Endothelial cell of umbilical vein (primary cell): ENCODE measurements at regions of chr13 and their contacts with region 1.

Region 1: DNA sequence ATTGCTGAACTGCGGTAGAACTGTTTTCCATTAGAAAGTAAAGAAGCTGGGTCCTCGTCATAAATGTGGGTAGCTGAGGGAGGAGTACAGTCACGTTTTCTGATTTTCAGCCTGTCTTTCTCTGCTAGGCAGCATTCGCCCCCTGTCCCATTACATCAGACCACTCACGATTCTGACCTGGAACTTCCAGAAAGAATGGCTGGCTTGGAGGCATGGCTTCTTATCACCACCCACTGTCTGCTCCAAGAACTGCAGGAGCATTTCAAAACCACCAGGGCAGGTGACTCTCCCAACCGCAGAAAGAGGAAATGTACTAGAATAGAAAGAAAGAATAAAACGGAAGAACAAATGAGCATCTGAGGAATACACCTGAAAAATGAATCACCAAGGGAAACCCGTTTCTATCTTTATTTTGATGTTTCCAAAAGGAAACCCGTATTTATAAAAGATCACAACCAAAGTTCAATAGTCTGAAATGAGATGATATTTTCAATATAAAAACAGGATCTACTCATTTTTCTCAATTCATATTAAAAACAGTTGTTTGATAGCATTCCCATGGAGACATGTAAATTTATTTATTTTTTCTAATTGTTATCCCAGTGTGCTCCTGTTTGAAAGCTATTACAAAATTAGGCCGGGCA is 22.1 kb upstream of the POMP start:
- DNase-seq: peak; percentile 85
- H3K4me3 ChIP-seq: no peak overlapping the region
- H3K27ac ChIP-seq: no peak overlapping the region
- H3K4me1 ChIP-seq: peaks cover 18% of the 10 kb centered on the region
- H3K27me3 ChIP-seq: no peaks in the 10 kb centered on the region
- CTCF ChIP-seq: peak; percentile 81 to 92
- POLR2A ChIP-seq: no peak

Region 2: DNA sequence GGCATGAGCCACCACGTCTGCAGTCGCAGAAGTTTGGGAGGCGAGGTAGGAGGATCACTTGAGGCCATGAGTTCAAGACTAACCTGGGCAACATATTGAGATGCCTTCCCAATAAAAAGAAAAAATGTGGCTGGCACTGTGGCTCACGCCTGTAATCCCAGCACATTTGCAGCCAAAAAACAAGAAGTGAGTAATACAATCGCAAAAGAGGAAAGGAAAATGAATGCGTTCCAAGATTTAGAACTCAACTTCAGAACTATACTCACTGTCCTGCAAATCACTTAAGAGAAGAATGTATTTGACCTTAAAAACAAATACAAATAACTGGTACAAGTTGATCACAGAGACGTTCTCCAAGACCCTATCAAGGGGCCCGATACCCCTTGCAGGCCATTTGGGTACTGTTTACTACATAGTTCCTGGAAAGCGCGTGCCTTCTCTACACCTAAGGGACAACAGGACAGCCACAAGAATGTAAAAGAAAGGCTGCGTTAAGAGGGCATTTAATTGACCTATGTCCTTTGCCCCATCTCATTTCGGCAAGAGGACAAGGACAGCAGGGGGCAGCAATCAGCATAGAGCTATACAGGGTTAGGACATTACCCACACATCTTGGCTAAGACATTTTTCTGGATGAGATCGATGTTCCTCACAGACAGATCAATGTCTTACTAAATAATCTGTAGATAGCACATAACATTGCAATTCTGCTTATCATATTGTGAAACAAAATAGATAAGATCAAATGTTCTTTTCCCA is 577.8 kb before region 1 on chr13:
- CTCF ChIA-PET with region 1: interaction called, 4 read pairs
- POLR2A ChIA-PET with region 1: no interaction called
- dilution Hi-C with region 1: no loop called
- intact Hi-C with region 1: loop called (anchors 1 kb)
- DNase-seq: peak; percentile 46
- H3K4me3 ChIP-seq: no peak overlapping the region
- H3K27ac ChIP-seq: no peak overlapping the region
- H3K4me1 ChIP-seq: no peaks in the 10 kb centered on the region
- H3K27me3 ChIP-seq: peaks cover 7 to 9% of the 10 kb centered on the region in 2 experiments
- CTCF ChIP-seq: peak; percentile 40 to 44
- POLR2A ChIP-seq: no peak

Region 3: DNA sequence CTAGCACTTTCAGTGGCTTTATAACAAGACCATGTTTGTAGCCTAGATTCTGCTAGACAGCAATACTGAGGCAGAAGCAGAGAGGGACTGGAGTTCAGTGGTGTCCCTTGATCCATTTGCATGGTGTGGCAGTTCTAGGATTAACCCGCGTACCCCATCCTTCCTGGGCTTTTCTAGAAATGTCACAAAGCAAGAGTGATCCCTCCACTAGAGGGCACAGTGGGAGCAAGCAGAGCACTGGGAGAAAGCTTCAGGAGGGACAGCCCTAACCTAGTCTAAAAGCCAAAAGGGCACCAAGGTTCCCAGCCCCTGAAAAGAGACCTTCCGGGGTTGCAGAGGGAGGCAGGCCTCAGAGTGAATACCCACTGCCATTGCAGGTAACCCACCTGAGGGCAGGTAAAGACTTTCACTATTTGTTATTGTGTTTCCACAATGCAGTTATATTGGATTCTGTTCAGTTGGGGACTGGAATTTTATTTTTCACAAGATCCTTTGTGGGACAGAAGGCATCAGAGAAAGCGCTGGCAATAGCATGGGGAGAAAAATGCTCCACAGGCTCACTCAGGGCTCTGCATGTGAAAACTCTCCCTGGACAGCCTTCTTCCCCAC is 312.5 kb before region 1 on chr13:
- CTCF ChIA-PET with region 1: interaction called, 28 read pairs
- POLR2A ChIA-PET with region 1: no interaction called
- dilution Hi-C with region 1: no loop called
- intact Hi-C with region 1: loop called (anchors 1 kb)
- DNase-seq: peak; percentile 80
- H3K4me3 ChIP-seq: no peak overlapping the region
- H3K27ac ChIP-seq: peak overlapping the region; percentile 86
- H3K4me1 ChIP-seq: peaks cover 63% of the 10 kb centered on the region
- H3K27me3 ChIP-seq: no peaks in the 10 kb centered on the region
- CTCF ChIP-seq: peak; percentile 81 to 87
- POLR2A ChIP-seq: no peak

Region 4: DNA sequence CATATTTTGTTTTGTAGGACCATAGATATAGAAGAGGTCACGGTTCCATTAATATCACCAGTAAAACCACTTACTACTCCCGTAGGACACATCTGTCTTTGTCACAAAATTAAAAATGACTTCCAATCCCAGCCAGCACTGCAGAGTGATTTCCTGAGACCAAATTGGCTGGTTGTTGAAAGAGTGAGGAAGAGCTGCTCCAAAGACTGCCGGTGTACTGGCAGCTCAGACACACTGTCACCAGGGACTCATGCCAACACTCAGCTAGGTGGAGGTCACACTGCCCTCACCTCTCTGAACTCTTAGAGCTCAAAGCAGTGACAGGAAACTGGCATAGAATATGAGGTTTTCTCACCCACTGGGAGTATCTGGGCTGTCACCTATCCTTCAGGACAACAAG is 194.0 kb before region 1 on chr13:
- CTCF ChIA-PET with region 1: no interaction called
- POLR2A ChIA-PET with region 1: no interaction called
- dilution Hi-C with region 1: no loop called
- intact Hi-C with region 1: no loop called
- DNase-seq: no peak
- H3K4me3 ChIP-seq: no peak overlapping the region
- H3K27ac ChIP-seq: no peak overlapping the region
- H3K4me1 ChIP-seq: peaks cover 23% of the 10 kb centered on the region
- H3K27me3 ChIP-seq: no peaks in the 10 kb centered on the region
- CTCF ChIP-seq: no peak
- POLR2A ChIP-seq: no peak

Region 5: GRCh38 chr13:28475916-28476725 is 160.7 kb before region 1 on chr13:
- CTCF ChIA-PET with region 1: interaction called, 4 read pairs
- POLR2A ChIA-PET with region 1: no interaction called
- dilution Hi-C with region 1: no loop called
- intact Hi-C with region 1: loop called (anchors 1 kb)
- DNase-seq: peak; percentile 86
- H3K4me3 ChIP-seq: no peak overlapping the region
- H3K27ac ChIP-seq: peak overlapping the region; percentile 59
- H3K4me1 ChIP-seq: peaks cover 61% of the 10 kb centered on the region
- H3K27me3 ChIP-seq: no peaks in the 10 kb centered on the region
- CTCF ChIP-seq: no peak
- POLR2A ChIP-seq: no peak

Region 6: DNA sequence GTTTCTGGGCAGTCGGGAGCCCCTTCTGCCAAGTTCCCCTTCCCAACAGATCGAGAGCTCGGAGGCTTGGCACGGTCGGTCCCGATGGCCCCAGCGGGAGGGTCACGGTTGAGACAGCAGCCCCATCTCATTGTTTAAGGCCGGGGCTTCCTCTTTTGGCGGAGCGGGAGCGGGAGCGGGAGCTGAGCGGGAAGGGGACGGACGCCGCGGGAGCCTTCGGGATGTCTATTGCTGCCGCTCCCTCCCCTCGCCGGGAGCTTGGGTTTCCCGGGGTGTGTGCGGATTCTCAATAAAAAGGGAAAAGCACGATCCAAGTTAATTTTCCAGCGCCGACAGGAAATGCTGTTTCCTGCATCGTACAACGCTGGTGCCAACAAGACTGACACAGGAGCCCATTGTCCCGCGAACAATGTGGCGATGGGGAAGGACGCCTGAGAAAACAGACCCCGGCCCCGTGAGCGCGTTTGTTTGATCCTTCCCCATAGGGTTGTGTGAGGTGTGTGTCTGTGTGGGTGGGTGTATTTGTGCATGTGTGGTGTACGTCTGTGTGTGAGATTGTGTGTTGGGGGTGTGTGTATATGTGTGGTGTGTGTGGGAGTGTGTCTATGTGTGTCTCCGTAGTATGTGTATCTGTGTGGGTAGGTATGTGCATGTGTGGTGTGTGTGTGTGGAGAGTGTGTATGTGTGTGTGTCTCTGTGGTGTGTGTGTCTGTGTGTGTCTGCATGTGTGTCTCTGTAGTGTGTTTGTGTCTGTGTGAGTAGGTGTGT is 105.5 kb before region 1 on chr13:
- CTCF ChIA-PET with region 1: interaction called, 4 read pairs
- POLR2A ChIA-PET with region 1: no interaction called
- dilution Hi-C with region 1: no loop called
- intact Hi-C with region 1: loop called (anchors 1 kb)
- DNase-seq: peak; percentile 85
- H3K4me3 ChIP-seq: peak overlapping the region in 2 of 3 experiments; percentile 45
- H3K27ac ChIP-seq: peak overlapping the region; percentile 36
- H3K4me1 ChIP-seq: peaks cover 14% of the 10 kb centered on the region
- H3K27me3 ChIP-seq: no peaks in the 10 kb centered on the region
- CTCF ChIP-seq: no peak
- POLR2A ChIP-seq: no peak

Region 7: GRCh38 chr13:28658796-28659620 is 22.2 kb after region 1 on chr13 and contains the start of gene POMP:
- CTCF ChIA-PET with region 1: interaction called, 4 read pairs
- POLR2A ChIA-PET with region 1: interaction called, 3 read pairs
- dilution Hi-C with region 1: no loop called
- intact Hi-C with region 1: loop called (anchors 1 kb)
- DNase-seq: peak; percentile 91
- H3K4me3 ChIP-seq: peak within 1 kb of the TSS; percentile 90 to 96 (median 96)
- H3K27ac ChIP-seq: peak within 1 kb of the TSS; percentile 99
- H3K4me1 ChIP-seq: peaks cover 20% of the 10 kb centered on the region
- H3K27me3 ChIP-seq: no peaks in the 10 kb centered on the region
- CTCF ChIP-seq: no peak
- POLR2A ChIP-seq: peak; percentile 43
- total RNA-seq, gene POMP: 88.9 and 105 TPM in 2 replicates